ENCODE measurements at regions of chr12 and their contacts with region 1.

Region 1: DNA sequence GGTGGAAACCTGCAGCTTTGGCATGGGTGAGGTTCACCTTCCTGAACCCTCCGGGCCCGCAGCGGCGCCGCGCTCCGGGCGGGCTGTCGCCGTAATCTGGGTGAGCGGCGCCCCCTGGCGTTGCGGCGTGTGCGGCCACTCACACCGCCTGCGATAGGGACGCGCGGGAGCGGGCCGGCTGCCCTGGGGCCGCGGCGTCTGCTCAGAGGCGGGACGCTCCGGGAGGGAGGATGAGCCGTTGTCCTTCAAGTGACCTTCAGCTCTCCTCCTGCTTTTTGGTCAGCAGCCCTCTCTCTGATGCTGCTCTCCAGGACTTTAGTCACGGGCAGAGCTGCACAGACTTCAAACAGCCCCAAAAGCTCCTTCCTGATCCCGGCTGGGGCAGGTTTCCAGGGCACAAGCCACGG is 211.7 kb upstream of the FKBP4 start:
- DNase-seq: peak; percentile 83
- ATAC-seq: peak; percentile 95
- H3K4me3 Mint-ChIP-seq: no peak overlapping the region
- H3K27ac Mint-ChIP-seq: no peak overlapping the region
- H3K4me1 Mint-ChIP-seq: no peaks in the 10 kb centered on the region
- H3K27me3 Mint-ChIP-seq: peaks cover 43% of the 10 kb centered on the region

Region 2: GRCh38 chr12:2358986-2359658 is 224.0 kb before region 1 on chr12:
- CTCF ChIA-PET with region 1: interaction called, 3 read pairs
- POLR2A ChIA-PET with region 1: no interaction called
- intact Hi-C with region 1: loop called in 1 of 2 experiments (anchors 1 kb)
- DNase-seq: no peak
- ATAC-seq: no peak
- H3K4me3 Mint-ChIP-seq: no peak overlapping the region
- H3K27ac Mint-ChIP-seq: no peak overlapping the region
- H3K4me1 Mint-ChIP-seq: peaks cover 26% of the 10 kb centered on the region
- H3K27me3 Mint-ChIP-seq: peaks cover 11% of the 10 kb centered on the region